ENCODE measurements at regions of chr6 and their contacts with region 1.

Region 1: DNA sequence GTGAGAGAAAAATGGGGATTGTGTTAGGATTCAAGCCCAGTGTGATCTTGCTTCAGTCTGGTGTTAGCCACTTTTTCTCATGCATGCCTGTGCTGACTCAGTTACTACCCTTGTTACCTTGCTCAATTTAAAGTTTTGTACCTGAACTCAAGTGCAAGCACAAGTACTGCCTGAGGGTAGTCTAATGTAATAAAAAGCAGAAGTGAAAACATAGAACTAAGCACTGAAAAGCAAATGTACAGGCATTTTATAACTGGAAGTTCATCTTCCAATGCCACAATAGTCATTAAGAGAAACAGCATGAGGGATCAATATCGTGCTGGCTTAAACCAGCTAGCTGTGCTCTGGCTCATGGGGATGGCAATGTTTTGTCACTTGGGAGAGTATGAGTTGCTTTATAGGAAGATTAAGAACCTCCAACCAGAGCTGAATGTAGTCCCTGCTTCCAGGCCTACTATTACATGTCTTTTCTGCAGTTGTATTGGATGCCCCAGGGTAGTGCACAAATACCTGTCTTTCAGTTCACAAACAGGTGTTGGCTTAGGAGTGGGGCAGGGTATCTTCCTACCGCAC is 48.7 kb downstream of the SLC35F1 start:
- ATAC-seq: peak in 4 of 8 experiments; percentile 7 to 54 (median 34)
- H3K4me3 ChIP-seq: no peak overlapping the region
- H3K27ac ChIP-seq: peak overlapping the region; percentile 8 to 28
- H3K4me1 ChIP-seq: peaks cover 31 to 43% of the 10 kb centered on the region in 2 donors

Region 2: DNA sequence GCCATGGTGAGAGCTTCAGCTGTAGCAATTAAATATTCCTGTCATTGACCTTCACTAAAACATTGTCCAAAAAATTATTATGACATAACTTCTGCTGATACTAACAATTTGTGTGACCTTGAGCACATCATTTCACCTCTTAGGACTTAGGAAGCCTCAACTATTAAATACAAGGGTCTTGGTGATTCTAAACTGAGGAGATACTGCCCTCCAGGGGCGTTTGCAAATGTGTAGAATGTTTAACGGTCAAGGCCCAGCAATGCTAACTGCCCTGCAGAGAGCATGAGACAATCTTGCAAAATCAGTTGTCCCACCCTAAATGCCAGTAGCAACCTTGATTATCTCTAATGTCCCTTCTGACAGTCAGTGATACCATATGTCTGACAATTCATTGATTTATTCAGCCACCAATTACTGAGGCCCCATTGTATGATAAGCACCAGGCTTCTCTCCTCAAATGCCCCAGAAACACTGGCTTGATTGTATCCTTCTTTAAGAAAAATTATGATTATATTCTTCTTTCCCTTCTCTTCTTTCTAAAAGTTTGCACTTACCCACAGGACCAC is 308.2 kb after region 1 on chr6:
- in situ Hi-C with region 1: loop called in 1 of 9 experiments (anchors 25 kb)
- ATAC-seq: peak in 6 of 8 experiments; percentile 27 to 97 (median 87)
- H3K4me3 ChIP-seq: no peak overlapping the region
- H3K27ac ChIP-seq: no peak overlapping the region
- H3K4me1 ChIP-seq: no peaks in the 10 kb centered on the region